ENCODE measurements at regions of chr16 and their contacts with region 1.

Region 1: DNA sequence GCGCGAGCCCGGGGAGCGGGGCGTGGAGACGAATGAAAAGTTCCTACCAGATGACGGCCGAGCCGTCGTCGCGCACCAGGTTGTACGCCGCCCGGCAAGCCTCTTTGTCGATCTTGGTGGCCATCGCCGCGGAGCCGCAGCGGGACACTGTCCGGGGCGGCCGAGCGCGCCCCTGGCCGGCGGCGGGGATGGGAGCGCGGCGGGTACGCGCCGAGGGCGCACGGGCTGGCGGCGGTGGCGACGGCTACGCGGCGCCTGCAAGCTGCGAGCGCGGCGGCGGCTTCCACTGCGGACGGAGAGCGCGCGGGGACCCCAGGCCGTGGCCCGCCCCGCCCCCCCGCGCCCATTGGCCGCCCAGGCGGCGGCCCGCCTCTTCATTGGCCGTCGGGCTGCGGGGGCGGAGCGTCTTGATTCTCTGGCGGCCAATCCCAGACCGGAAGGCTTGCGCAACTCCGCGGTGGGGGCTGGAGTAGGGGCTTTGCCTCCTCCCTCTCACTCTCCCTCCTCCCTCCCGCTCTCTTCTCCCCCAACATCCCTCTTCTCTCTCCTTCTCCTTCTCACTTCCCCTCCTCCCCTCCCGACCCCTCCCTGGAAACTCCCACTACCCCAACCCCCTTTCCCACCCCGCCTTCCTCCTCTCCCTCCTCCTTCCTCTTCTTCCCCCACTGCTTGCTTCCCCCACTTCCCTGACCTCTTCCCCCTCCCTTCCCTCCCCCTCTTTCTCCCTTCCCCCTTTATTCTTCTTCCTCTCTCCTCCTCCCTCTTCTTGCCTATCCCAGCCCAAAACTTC is at the start of gene COTL1:
- DNase-seq: peak; percentile 93
- H3K4me3 ChIP-seq: peak within 1 kb of the TSS; percentile 81 to 94 (median 84)
- H3K27ac ChIP-seq: peak within 1 kb of the TSS; percentile 57
- H3K4me1 ChIP-seq: peaks cover 31% of the 10 kb centered on the region
- H3K27me3 ChIP-seq: no peaks in the 10 kb centered on the region
- CTCF ChIP-seq: no peak
- POLR2A ChIP-seq: peak; percentile 93
- total RNA-seq, gene COTL1: 132 and 200 TPM in 2 replicates

Region 2: GRCh38 chr16:84504420-84505248 is 113.4 kb before region 1 on chr16 and contains the start of gene MEAK7:
- CTCF ChIA-PET with region 1: interaction called, 154 read pairs
- POLR2A ChIA-PET with region 1: no interaction called
- dilution Hi-C with region 1: loop called (anchors 25 kb)
- intact Hi-C with region 1: no loop called
- DNase-seq: peak; percentile 98
- H3K4me3 ChIP-seq: peak within 1 kb of the TSS; percentile 61 to 81 (median 62)
- H3K27ac ChIP-seq: peak within 1 kb of the TSS; percentile 38
- H3K4me1 ChIP-seq: peaks cover 10% of the 10 kb centered on the region
- H3K27me3 ChIP-seq: no peaks in the 10 kb centered on the region
- CTCF ChIP-seq: no peak
- POLR2A ChIP-seq: no peak
- total RNA-seq, gene MEAK7: 19.3 and 22.7 TPM in 2 replicates

Region 3: DNA sequence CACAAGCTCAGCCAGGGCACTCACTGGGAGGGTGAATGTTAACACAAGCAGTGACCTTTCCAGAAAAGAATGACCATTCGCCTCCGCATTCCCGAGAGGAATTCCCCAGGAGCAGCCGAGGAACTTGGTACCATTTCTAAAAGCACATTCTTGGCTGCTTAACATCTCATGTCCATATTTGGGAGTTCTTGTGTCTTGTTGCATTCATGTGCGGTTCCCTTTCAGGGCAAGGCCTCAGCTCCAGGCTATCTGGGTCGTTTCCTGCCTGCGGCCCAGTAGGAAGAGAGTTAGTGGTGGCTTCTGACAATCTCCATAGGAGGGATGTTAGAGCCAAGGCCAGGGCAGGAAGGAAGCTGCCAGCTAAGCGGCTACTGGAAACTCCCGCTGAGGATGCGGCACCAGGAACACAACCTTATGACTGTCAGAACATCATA is 85.7 kb before region 1 on chr16:
- CTCF ChIA-PET with region 1: interaction called, 11 read pairs
- POLR2A ChIA-PET with region 1: interaction called, 14 read pairs
- dilution Hi-C with region 1: no loop called
- intact Hi-C with region 1: loop called (anchors 1 kb)
- DNase-seq: peak; percentile 93
- H3K4me3 ChIP-seq: no peak overlapping the region
- H3K27ac ChIP-seq: peak overlapping the region; percentile 78
- H3K4me1 ChIP-seq: peaks cover 30% of the 10 kb centered on the region
- H3K27me3 ChIP-seq: no peaks in the 10 kb centered on the region
- CTCF ChIP-seq: no peak
- POLR2A ChIP-seq: peak; percentile 20

Region 4: DNA sequence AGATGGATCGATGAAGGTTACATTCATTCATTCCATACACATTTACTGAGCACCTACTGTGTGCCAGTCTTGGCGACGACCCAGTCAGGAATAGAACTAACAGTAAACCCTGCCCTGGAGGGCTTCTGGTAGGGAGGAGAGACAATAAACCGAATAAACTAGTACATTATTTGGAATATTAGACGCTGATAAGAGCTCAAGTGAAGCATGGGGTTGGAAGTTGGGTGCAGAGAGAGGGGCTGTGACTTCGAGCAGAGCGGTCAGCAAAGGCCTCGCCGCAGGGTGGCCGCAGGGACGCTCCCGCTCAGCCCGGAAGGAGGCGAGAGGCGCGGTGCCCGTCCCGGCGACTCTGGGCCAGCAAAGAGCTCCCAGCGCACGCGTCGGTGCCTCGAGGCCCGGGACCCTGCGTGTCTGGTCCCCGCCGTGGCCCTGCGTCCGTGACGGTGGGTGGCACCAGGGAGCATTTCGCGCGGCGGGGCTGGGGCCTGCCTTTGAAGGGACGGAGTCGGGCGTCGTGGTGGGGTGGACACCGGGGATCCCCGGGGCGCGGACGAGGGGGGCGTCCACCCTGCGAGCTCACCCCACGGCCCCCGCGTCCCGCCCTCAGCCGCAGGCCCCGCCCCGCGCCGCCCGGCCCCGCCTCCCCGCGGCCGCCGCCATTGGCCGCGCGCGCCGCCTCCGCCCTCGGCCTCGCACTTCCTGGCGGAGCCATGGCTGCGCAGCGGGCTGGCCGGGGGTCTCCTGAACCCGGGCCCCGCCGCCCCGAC is 30.0 kb after region 1 on chr16 and contains the start of gene KLHL36:
- CTCF ChIA-PET with region 1: interaction called, 4 read pairs
- POLR2A ChIA-PET with region 1: no interaction called
- dilution Hi-C with region 1: no loop called
- intact Hi-C with region 1: loop called (anchors 2 kb)
- DNase-seq: peak; percentile 33
- H3K4me3 ChIP-seq: peak within 1 kb of the TSS; percentile 32 to 65 (median 40)
- H3K27ac ChIP-seq: no peak within 1 kb of the TSS
- H3K4me1 ChIP-seq: peaks cover 9% of the 10 kb centered on the region
- H3K27me3 ChIP-seq: peaks cover 3% of the 10 kb centered on the region in 2 experiments
- CTCF ChIP-seq: no peak
- POLR2A ChIP-seq: peak; percentile 43
- total RNA-seq, gene KLHL36: 33.3 and 38.8 TPM in 2 replicates

Region 5: DNA sequence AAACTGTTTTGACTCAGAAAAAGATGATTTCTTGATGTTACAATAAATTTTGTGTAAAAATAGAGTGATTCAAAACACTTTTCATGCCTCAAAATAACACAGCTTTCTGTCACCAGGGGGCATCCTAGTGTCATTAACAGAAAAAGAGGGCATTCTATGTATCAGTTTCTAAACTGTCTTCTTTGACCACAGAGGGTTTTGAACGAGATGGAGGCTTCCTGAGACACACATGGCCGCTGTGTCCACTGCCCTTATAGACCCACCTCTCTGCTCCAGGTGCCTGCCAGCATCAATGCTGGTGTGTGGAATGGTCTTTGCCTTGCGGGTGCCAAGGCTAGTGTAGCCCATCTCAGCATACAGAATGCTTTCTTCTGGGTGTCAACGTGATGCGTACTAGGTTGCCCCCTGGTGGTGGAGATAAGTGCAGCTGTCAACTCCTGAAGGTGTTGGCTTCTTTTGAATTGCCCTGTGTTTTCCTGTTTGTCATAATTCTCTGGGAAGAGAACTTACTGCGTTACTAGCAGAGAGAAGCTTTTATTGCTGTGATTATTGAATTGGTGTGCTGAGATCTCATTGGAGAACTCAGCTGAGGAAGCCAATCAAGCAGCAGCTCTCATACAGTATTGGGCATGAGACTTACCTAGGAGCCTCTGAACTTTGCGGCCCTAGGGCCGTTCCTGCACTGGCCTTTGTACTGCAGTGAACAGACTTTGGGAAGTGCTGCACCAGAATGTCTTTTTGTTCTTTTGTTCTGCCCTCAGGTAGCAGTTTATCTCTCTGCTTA is 120.5 kb after region 1 on chr16:
- CTCF ChIA-PET with region 1: interaction called, 81 read pairs
- POLR2A ChIA-PET with region 1: no interaction called
- dilution Hi-C with region 1: no loop called
- intact Hi-C with region 1: loop called (anchors 1 kb)
- DNase-seq: peak; percentile 92
- H3K4me3 ChIP-seq: no peak overlapping the region
- H3K27ac ChIP-seq: no peak overlapping the region
- H3K4me1 ChIP-seq: peaks cover 28% of the 10 kb centered on the region
- H3K27me3 ChIP-seq: no peaks in the 10 kb centered on the region
- CTCF ChIP-seq: peak; percentile 88 to 92
- POLR2A ChIP-seq: no peak